ENCODE measurements at regions of chr2 and their contacts with region 1.

Region 1: DNA sequence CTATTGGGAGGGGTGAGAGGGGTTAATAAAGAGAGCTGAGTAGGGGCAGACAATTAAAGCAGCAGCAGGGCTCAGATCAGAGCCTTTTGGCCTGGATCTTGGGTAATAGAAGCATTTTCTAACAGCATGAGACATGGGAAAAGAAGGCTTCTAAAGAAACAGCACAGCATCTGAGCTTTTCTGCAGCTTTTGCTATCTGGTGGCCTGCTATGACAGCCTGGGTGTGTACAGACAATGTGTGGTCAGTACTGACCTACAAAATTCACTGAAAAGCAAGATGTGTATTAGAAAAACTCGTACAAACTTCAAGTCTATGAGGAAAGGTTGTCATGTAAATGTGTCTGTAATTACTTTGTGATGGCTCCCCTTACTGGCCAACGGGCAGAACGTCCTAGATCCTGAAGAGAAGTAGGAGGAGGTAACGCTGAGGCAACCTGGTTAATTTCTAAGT is 95.6 kb downstream of the GALNT3 start:
- DNase-seq: peak in 5 of 10 donors; percentile 20 to 46 (median 34)

Region 2: DNA sequence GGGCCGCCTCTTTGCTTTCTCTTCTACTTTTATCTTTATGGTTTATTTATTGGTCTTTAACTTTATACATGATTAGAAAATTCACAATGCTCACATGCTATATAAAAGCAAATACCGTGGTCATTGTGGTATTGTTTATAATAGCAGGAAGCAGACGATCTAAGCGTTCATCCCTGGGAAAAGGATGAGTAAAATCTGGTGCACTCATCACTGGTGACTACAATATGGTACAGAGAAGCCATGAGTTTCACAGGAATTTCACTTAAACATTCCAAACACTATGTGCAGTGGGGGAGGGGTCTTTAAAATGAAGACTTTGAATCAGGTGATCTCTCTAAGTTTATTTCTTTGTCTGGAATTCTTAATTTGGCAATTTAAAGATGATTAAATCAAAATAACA is 592.5 kb before region 1 on chr2:
- intact Hi-C with region 1: no loop called
- DNase-seq: no peak

Region 3: DNA sequence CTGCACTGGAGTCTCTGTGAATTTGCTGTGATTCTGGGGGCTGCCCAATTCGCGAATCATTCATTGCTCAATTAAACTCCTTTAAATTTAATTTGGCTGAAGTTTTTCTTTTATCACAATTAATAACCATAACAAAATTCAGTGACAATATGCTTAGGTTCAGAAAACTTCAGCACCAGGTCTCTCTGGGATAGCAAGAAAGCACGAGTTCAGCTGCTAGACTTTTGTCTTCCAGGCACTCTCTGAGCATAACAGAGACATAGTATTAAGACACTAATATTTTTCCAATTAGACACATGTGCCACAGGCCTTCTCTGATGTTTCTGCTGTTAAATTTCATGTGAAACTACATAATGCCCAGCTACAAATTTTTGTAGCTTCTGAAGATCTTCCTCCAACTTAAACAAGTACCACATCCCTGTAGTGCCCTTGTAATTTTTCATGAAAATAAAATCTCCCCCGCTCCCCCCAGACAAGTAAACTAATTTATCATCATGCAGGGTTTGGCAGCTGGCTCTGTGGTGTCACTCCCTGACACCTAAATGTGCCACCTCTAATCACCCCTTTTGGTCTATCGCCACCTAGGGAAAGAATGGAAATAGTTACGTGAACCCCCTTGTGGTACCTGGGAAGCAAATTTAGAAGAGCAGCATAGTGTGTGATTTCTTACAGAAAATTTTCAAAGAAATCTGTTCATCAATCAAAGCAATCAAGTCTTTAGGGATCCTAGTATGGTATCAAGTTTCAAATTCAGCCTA is 134.8 kb before region 1 on chr2:
- intact Hi-C with region 1: loop called (anchors 5 kb)
- DNase-seq: no peak

Region 4: GRCh38 chr2:165874445-165875039 is 176.1 kb after region 1 on chr2:
- intact Hi-C with region 1: loop called (anchors 5 kb)
- DNase-seq: no peak